Astrocyte of the cerebellum (primary cell): ENCODE measurements at regions of chr17 and their contacts with region 1.

Region 1: GRCh38 chr17:12859520-12859919 is 70.2 kb downstream of the ARHGAP44 start:
- DNase-seq: no peak
- H3K4me3 ChIP-seq: no peak overlapping the region
- CTCF ChIP-seq: no peak

Region 2: GRCh38 chr17:12706070-12706469 is 153.4 kb before region 1 on chr17:
- in situ Hi-C with region 1: no loop called
- DNase-seq: no peak
- H3K4me3 ChIP-seq: no peak overlapping the region
- CTCF ChIP-seq: no peak

Region 3: GRCh38 chr17:12815642-12816141 is 43.8 kb before region 1 on chr17:
- in situ Hi-C with region 1: loop called (anchors 5 kb)
- DNase-seq: no peak
- H3K4me3 ChIP-seq: no peak overlapping the region
- CTCF ChIP-seq: no peak